CD8-positive, alpha-beta T cell (primary cell): ENCODE measurements at regions of chr14 and their contacts with region 1.

Region 1: GRCh38 chr14:21557084-21557901 is 22.6 kb downstream of the OR10G3 start:
- DNase-seq: peak; percentile 55 to 89 (median 77)
- ATAC-seq: peak; percentile 73
- H3K4me3 ChIP-seq: peak overlapping the region; percentile 2 to 15
- H3K4me3 Mint-ChIP-seq: peak overlapping the region; percentile 26
- H3K27ac ChIP-seq: no peak overlapping the region
- H3K27ac Mint-ChIP-seq: no peak overlapping the region
- H3K4me1 ChIP-seq: peaks cover 4% of the 10 kb centered on the region
- H3K4me1 Mint-ChIP-seq: peaks cover 6% of the 10 kb centered on the region
- H3K27me3 ChIP-seq: no peaks in the 10 kb centered on the region
- H3K27me3 Mint-ChIP-seq: no peaks in the 10 kb centered on the region
- CTCF ChIP-seq: peak; percentile 73

Region 2: GRCh38 chr14:21241218-21241819 is 316.0 kb before region 1 on chr14:
- CTCF ChIA-PET with region 1: no interaction called
- POLR2A ChIA-PET with region 1: no interaction called
- intact Hi-C with region 1: loop called in 1 of 2 experiments (anchors 10 kb)
- DNase-seq: peak in 2 of 9 experiments; percentile 55 to 65
- ATAC-seq: no peak
- H3K4me3 ChIP-seq: no peak overlapping the region
- H3K4me3 Mint-ChIP-seq: no peak overlapping the region
- H3K27ac ChIP-seq: peak overlapping the region in 1 of 2 experiments; percentile 10
- H3K27ac Mint-ChIP-seq: no peak overlapping the region
- H3K4me1 ChIP-seq: peaks cover 52% of the 10 kb centered on the region
- H3K4me1 Mint-ChIP-seq: peaks cover 81% of the 10 kb centered on the region
- H3K27me3 ChIP-seq: no peaks in the 10 kb centered on the region
- H3K27me3 Mint-ChIP-seq: no peaks in the 10 kb centered on the region
- CTCF ChIP-seq: peak; percentile 66

Region 3: DNA sequence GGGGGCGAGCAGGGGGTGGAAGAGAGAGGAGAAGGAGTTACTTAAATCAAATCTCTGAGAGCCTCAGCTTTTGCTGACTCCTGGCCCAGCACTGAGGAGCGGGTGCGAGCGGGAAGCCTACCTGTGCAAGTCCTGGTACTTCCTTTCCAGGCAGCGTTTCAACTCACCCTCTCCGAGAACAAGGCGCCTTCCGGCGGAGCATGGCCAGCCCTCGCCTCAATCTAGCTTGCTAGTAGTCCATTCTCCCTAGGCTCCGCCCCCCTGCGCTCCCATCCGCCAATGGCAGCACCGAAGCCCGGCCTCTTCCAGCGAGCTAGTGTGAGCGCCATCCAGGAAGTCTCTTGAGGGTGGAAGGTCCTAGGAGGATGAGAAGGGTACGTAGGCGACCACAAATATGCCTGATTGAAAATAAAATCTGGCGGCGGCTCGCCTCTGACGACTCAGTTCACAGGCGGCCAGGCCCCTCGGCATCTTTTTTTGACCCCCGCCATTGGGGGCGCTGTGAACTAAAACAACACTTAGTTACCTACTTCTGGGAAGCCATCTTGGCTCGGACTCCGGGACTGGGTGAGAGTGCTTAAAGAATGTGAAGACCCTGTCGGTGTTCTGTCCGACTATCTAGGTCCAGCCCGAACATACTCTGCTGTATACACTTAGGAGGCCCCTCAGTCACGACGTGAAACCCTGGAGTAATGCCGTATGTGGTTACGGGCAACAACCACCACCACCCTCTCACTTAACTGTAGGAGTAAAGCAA is 101.2 kb before region 1 on chr14 and contains the start of gene CHD8:
- CTCF ChIA-PET with region 1: interaction called, 3 read pairs
- POLR2A ChIA-PET with region 1: no interaction called
- intact Hi-C with region 1: loop called in 1 of 2 experiments (anchors 1 kb)
- DNase-seq: peak; percentile 98 to 100 (median 99)
- ATAC-seq: peak; percentile 96
- H3K4me3 ChIP-seq: peak within 1 kb of the TSS; percentile 85 to 97
- H3K4me3 Mint-ChIP-seq: peak within 1 kb of the TSS; percentile 100
- H3K27ac ChIP-seq: peak within 1 kb of the TSS; percentile 86 to 98
- H3K27ac Mint-ChIP-seq: peak within 1 kb of the TSS; percentile 100
- H3K4me1 ChIP-seq: peaks cover 21% of the 10 kb centered on the region
- H3K4me1 Mint-ChIP-seq: peaks cover 36% of the 10 kb centered on the region
- H3K27me3 ChIP-seq: no peaks in the 10 kb centered on the region
- H3K27me3 Mint-ChIP-seq: no peaks in the 10 kb centered on the region
- CTCF ChIP-seq: peak; percentile 60
- total RNA-seq, gene CHD8: 132 to 144 TPM

Region 4: DNA sequence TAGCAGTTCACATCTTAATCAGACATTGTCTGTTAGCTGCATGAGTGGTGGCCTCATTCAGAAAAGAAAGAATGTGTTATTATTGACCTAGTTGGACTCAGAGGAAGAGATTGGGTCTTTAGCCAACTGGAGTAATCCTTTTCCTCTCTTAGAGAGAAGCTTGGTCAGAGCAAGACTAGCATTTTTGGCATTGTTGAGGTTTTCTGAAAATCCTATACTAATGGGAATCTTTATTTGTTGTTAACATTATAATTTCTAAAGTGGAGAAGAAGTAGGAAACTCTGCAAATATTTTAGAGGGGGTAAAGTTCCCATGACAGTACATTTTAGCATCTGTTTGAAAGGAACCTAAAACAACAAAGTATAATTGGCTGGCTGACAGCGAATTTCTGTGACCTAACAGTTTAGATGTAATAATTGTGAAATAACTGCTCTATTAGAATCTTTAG is 70.6 kb before region 1 on chr14:
- CTCF ChIA-PET with region 1: interaction called, 12 read pairs
- POLR2A ChIA-PET with region 1: no interaction called
- intact Hi-C with region 1: no loop called
- DNase-seq: no peak
- ATAC-seq: no peak
- H3K4me3 ChIP-seq: no peak overlapping the region
- H3K4me3 Mint-ChIP-seq: no peak overlapping the region
- H3K27ac ChIP-seq: no peak overlapping the region
- H3K27ac Mint-ChIP-seq: no peak overlapping the region
- H3K4me1 ChIP-seq: no peaks in the 10 kb centered on the region
- H3K4me1 Mint-ChIP-seq: peaks cover 8% of the 10 kb centered on the region
- H3K27me3 ChIP-seq: no peaks in the 10 kb centered on the region
- H3K27me3 Mint-ChIP-seq: no peaks in the 10 kb centered on the region
- CTCF ChIP-seq: no peak

Region 5: GRCh38 chr14:21510735-21511657 is 46.3 kb before region 1 on chr14 and contains the start of gene METTL3:
- CTCF ChIA-PET with region 1: interaction called, 9 read pairs
- POLR2A ChIA-PET with region 1: interaction called, 3 read pairs
- intact Hi-C with region 1: loop called in 1 of 2 experiments (anchors 1 kb)
- DNase-seq: peak; percentile 87 to 98 (median 92)
- ATAC-seq: peak; percentile 99
- H3K4me3 ChIP-seq: peak within 1 kb of the TSS; percentile 85 to 90
- H3K4me3 Mint-ChIP-seq: peak within 1 kb of the TSS; percentile 99
- H3K27ac ChIP-seq: peak within 1 kb of the TSS; percentile 88 to 89
- H3K27ac Mint-ChIP-seq: peak within 1 kb of the TSS; percentile 99
- H3K4me1 ChIP-seq: peaks cover 22% of the 10 kb centered on the region
- H3K4me1 Mint-ChIP-seq: peaks cover 39% of the 10 kb centered on the region
- H3K27me3 ChIP-seq: no peaks in the 10 kb centered on the region
- H3K27me3 Mint-ChIP-seq: no peaks in the 10 kb centered on the region
- CTCF ChIP-seq: no peak
- total RNA-seq, gene METTL3: 23.7 to 26.5 TPM

Region 6: DNA sequence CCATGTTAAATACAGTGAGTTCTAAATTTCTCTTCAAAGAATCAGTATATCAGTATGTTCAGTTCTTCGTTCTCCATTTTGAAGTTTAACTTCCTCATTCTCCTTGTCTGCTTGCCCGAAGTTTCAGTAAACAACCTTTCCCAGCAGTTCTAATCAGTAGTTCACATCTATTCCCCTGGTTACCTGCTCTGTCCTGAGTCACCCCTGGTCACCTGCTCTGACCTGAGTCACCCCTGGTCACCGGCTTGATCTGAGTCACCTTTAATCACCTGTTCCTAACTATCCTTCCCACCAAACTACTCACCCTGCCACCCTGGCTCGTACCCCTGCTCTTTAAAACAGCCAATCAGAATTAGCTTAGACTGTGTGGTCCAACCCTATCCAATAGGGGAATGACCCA is 32.0 kb after region 1 on chr14:
- CTCF ChIA-PET with region 1: no interaction called
- POLR2A ChIA-PET with region 1: no interaction called
- intact Hi-C with region 1: no loop called
- DNase-seq: no peak
- ATAC-seq: no peak
- H3K4me3 ChIP-seq: no peak overlapping the region
- H3K4me3 Mint-ChIP-seq: no peak overlapping the region
- H3K27ac ChIP-seq: no peak overlapping the region
- H3K27ac Mint-ChIP-seq: no peak overlapping the region
- H3K4me1 ChIP-seq: no peaks in the 10 kb centered on the region
- H3K4me1 Mint-ChIP-seq: no peaks in the 10 kb centered on the region
- H3K27me3 ChIP-seq: no peaks in the 10 kb centered on the region
- H3K27me3 Mint-ChIP-seq: peaks cover 23% of the 10 kb centered on the region
- CTCF ChIP-seq: no peak